Heart left ventricle (tissue), 16 donors: ENCODE measurements at regions of chr9 and their contacts with region 1.

Region 1: DNA sequence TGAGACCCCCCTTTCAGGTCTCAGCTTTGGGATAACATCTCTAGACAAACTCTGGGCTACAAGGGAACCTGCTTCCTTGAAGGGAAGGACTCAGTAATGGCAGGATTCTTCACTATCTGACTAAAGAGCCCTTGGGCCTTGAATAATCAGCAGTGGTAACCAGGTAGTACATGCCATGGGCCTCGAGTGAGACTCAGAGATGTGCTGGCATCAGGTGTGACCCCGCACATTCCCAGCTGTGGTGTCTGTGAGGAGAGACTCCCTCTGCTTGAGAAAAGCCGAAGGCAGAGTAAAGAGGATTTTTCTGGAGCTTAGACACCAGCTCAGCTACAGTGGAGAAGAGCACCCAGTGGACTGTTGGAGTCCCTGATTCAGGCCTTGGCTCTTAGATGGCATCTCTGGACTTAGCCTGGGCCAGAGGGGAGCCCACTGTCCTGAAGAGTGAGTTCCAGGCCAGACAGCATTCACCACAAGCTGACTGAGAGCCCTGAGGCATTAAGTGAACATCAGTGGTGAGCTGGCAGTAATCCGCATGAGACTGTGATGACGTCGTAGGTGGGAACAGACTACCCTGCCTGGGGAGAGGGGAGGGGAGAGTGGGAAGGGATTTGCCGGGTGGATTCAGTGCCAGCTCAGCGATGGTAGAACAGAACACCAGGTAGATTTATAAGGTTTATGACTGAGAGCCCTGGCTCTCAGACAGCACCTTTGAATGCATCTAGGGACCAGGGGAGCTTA is 5.3 kb upstream of the ZNF782 start:
- DNase-seq: no peak
- ATAC-seq: no peak
- H3K4me3 ChIP-seq: no peak overlapping the region
- H3K27ac ChIP-seq: no peak overlapping the region
- H3K4me1 ChIP-seq: peaks cover 0 to 4% (median 1%) of the 10 kb centered on the region in 12 donors
- H3K27me3 ChIP-seq: no peaks in the 10 kb centered on the region
- CTCF ChIP-seq: no peak
- POLR2A ChIP-seq: no peak

Region 2: DNA sequence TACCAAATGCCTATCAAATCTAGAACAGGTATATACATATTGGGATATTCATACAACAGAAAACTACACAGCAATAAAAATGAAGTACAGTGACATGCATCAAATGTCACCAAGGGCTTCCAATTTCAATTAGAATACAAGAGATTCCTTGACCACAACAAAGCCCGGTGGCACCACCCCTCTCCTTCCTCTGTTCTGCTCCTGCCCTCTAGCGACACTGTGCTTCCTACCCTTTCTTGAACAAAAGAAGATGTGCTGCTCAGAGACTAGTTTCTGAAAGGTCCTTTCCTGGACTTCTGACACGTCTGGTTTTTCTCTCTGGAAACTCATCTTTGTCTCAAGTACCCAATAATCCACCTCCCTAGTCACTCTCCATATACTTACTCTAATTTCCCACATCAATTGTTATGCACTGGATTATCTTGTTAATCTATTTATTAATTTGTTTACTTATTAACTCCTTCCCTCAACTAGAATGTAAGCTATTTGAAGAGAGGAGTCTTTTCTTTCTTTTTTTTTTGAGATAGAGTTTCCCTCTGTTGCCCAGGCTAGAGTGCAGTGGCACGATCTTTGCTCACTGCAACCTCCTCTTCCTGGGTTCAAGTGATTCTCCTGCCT is 249.7 kb after region 1 on chr9:
- intact Hi-C with region 1: loop called (anchors 2 to 10 kb)
- DNase-seq: peak in 2 of 5 donors; percentile 25 to 47
- ATAC-seq: peak in 2 of 4 donors; percentile 58 to 61
- H3K4me3 ChIP-seq: no peak overlapping the region
- H3K27ac ChIP-seq: no peak overlapping the region
- H3K4me1 ChIP-seq: no peaks in the 10 kb centered on the region
- H3K27me3 ChIP-seq: peaks cover 0 to 5% (median 0%) of the 10 kb centered on the region in 9 donors
- CTCF ChIP-seq: peak; percentile 18 to 61 (median 44)
- POLR2A ChIP-seq: no peak

Region 3: GRCh38 chr9:97176206-97176605 is 316.6 kb after region 1 on chr9:
- intact Hi-C with region 1: no loop called
- DNase-seq: no peak
- ATAC-seq: peak in 2 of 4 donors; percentile 37 to 39
- H3K4me3 ChIP-seq: no peak overlapping the region
- H3K27ac ChIP-seq: no peak overlapping the region
- H3K4me1 ChIP-seq: peaks cover 0 to 7% (median 0%) of the 10 kb centered on the region in 12 donors
- H3K27me3 ChIP-seq: peaks cover 0 to 3% (median 0%) of the 10 kb centered on the region in 9 donors
- CTCF ChIP-seq: no peak
- POLR2A ChIP-seq: no peak

Region 4: GRCh38 chr9:97398999-97399758 is 539.5 kb after region 1 on chr9:
- intact Hi-C with region 1: loop called (anchors 1 to 5 kb)
- DNase-seq: peak; percentile 21 to 83 (median 72)
- ATAC-seq: peak; percentile 55 to 88 (median 86)
- H3K4me3 ChIP-seq: no peak overlapping the region
- H3K27ac ChIP-seq: no peak overlapping the region
- H3K4me1 ChIP-seq: peaks cover 0 to 6% (median 0%) of the 10 kb centered on the region in 12 donors
- H3K27me3 ChIP-seq: peaks cover 0 to 4% (median 0%) of the 10 kb centered on the region in 9 donors
- CTCF ChIP-seq: peak; percentile 80 to 97 (median 91)
- POLR2A ChIP-seq: no peak